Activated T-helper 1 cell treated with anti-CD3 and anti-CD28 coated beads, Interleukin-12 subunit alpha, Interleukin-12 subunit beta, Interleukin-2, Interleukin-4 antibody, amounts not matched to agents 30 ng/mL and 10 ng/mL and 1 ng/mL, durations not matched to agents 14 hours and 24 hours and 36 hours (primary cell): ENCODE measurements at regions of chr5 and their contacts with region 1.

Region 1: DNA sequence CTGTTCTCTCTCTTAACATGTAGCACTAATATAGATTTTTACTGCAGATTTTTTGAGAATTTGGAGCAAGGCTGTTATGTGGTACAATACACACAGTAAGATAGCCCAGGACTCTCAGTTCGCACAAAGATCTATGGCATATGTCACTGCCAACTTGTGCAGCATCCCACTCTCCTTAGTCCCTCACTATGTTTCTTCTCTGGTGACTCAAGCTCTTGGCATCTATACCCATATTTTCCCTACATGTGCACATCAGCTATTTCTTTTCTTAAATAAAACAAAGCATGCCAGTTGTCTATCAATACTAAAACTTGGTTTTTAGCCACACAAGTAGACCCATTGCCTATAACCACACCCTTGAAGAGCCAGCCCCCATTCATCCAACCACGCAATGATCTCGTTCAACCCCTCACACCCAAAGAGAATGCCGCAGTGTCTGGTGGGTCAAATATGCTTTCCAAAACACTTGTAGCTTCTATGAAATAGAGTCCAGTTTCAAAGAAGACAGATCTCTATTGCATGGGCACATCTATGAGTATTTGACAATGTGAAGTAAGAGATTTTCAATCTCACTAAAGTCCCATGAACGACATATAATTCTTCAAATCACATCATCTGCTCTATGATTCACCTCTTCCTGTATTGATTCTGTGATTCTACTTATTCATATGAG is 18.2 kb upstream of the IL7R start:
- DNase-seq: no peak
- H3K4me3 Mint-ChIP-seq: no peak overlapping the region
- H3K27ac Mint-ChIP-seq: peak overlapping the region; percentile 65
- H3K4me1 Mint-ChIP-seq: peaks cover 60% of the 10 kb centered on the region
- H3K27me3 Mint-ChIP-seq: no peaks in the 10 kb centered on the region

Region 2: DNA sequence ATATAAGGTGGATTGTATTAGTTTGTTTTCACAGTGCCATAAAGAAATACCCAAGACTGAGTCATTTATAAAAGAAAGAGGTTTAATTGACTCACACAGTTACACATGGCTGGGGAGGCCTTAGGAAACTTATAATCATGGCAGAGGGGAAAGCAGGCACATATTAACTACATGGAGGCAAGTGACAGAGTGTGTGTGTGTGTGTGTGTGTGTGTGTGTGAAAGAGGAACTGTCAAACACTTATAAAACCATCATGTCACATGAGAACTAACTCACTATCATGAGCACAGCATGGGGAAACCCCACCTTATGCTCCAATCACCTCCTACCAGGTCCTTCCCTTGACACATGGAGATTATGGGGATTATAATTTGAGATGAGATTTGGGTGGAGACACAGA is 102.2 kb before region 1 on chr5:
- intact Hi-C with region 1: loop called (anchors 5 kb)
- DNase-seq: no peak
- H3K4me3 Mint-ChIP-seq: no peak overlapping the region
- H3K27ac Mint-ChIP-seq: peak overlapping the region; percentile 69
- H3K4me1 Mint-ChIP-seq: peaks cover 24% of the 10 kb centered on the region
- H3K27me3 Mint-ChIP-seq: no peaks in the 10 kb centered on the region

Region 3: GRCh38 chr5:35785601-35786085 is 52.9 kb before region 1 on chr5:
- intact Hi-C with region 1: loop called (anchors 1 kb)
- DNase-seq: peak; percentile 30
- H3K4me3 Mint-ChIP-seq: peak overlapping the region; percentile 24
- H3K27ac Mint-ChIP-seq: peak overlapping the region; percentile 86
- H3K4me1 Mint-ChIP-seq: peaks cover 90% of the 10 kb centered on the region
- H3K27me3 Mint-ChIP-seq: no peaks in the 10 kb centered on the region

Region 4: GRCh38 chr5:35799753-35800152 is 38.8 kb before region 1 on chr5:
- intact Hi-C with region 1: loop called (anchors 1 kb)
- DNase-seq: no peak
- H3K4me3 Mint-ChIP-seq: no peak overlapping the region
- H3K27ac Mint-ChIP-seq: no peak overlapping the region
- H3K4me1 Mint-ChIP-seq: peaks cover 70% of the 10 kb centered on the region
- H3K27me3 Mint-ChIP-seq: no peaks in the 10 kb centered on the region

Region 5: GRCh38 chr5:35811108-35811741 is 27.3 kb before region 1 on chr5:
- intact Hi-C with region 1: loop called (anchors 1 kb)
- DNase-seq: no peak
- H3K4me3 Mint-ChIP-seq: peak overlapping the region; percentile 70
- H3K27ac Mint-ChIP-seq: peak overlapping the region; percentile 98
- H3K4me1 Mint-ChIP-seq: peaks cover 56% of the 10 kb centered on the region
- H3K27me3 Mint-ChIP-seq: no peaks in the 10 kb centered on the region

Region 6: DNA sequence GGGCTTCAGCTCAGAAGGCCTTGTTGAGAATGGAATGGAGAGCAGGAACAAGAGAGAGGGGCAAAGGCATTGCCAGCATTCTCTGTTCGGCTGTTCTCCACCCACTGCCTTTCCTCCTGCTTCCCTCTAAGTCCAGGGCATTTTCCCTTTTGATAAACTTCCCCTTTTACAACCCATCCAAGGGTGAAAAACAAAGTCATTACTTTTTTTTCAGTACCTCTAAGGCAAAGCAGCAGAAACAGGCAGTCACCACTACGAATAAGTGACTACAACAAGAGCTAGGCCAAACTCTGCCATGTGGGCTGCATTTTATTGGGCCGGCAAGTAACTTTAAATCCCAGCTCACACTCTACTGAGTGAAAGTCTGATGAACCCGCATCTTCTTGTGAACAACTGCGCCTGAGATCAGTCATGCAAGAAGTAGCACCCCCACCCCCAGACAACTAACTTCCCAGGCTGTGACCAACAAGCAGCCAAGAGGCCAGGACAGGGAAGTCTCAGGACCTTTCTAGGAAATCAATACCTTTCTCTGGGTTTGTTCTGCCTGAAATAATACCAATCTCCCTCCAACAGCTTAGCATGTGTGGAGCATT is 31.3 kb after region 1 on chr5:
- intact Hi-C with region 1: no loop called
- DNase-seq: no peak
- H3K4me3 Mint-ChIP-seq: no peak overlapping the region
- H3K27ac Mint-ChIP-seq: peak overlapping the region; percentile 16
- H3K4me1 Mint-ChIP-seq: peaks cover 81% of the 10 kb centered on the region
- H3K27me3 Mint-ChIP-seq: no peaks in the 10 kb centered on the region